Calu3 (cell line): ENCODE measurements at regions of chr4 and their contacts with region 1.

Region 1: GRCh38 chr4:127486248-127486647 is 146.5 kb upstream of the INTU start:
- DNase-seq: no peak
- H3K4me3 Mint-ChIP-seq: no peak overlapping the region
- H3K27ac Mint-ChIP-seq: no peak overlapping the region
- H3K4me1 Mint-ChIP-seq: peaks cover 11% of the 10 kb centered on the region
- H3K27me3 Mint-ChIP-seq: no peaks in the 10 kb centered on the region
- CTCF ChIP-seq: no peak

Region 2: DNA sequence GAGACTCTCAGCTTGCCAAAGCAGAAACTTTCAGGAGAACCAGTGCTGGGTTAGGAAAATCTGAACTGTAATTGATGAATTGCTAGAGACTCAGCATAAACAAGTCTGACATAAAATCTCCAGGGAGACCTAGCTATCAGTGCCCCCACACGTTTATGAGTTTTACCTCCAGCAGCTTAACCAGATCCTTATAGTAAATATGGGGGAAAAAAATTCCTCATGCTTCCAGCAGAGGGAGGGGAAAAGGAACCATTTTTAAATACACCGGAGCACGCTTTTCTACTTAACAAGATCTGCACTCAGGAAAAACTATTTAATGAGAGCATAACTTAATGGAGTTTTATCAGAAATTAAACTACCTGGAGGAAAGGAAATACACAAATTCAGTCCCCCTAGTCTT is 894.2 kb before region 1 on chr4:
- CTCF ChIA-PET with region 1: no interaction called
- intact Hi-C with region 1: loop called (anchors 10 kb)
- DNase-seq: no peak
- H3K4me3 Mint-ChIP-seq: no peak overlapping the region
- H3K27ac Mint-ChIP-seq: no peak overlapping the region
- H3K4me1 Mint-ChIP-seq: no peaks in the 10 kb centered on the region
- H3K27me3 Mint-ChIP-seq: no peaks in the 10 kb centered on the region
- CTCF ChIP-seq: no peak

Region 3: GRCh38 chr4:126794363-126794762 is 691.9 kb before region 1 on chr4:
- CTCF ChIA-PET with region 1: no interaction called
- intact Hi-C with region 1: no loop called
- DNase-seq: no peak
- H3K4me3 Mint-ChIP-seq: no peak overlapping the region
- H3K27ac Mint-ChIP-seq: no peak overlapping the region
- H3K4me1 Mint-ChIP-seq: no peaks in the 10 kb centered on the region
- H3K27me3 Mint-ChIP-seq: no peaks in the 10 kb centered on the region
- CTCF ChIP-seq: no peak